IMR-90 (cell line): ENCODE measurements at regions of chr7 and their contacts with region 1.

Region 1: DNA sequence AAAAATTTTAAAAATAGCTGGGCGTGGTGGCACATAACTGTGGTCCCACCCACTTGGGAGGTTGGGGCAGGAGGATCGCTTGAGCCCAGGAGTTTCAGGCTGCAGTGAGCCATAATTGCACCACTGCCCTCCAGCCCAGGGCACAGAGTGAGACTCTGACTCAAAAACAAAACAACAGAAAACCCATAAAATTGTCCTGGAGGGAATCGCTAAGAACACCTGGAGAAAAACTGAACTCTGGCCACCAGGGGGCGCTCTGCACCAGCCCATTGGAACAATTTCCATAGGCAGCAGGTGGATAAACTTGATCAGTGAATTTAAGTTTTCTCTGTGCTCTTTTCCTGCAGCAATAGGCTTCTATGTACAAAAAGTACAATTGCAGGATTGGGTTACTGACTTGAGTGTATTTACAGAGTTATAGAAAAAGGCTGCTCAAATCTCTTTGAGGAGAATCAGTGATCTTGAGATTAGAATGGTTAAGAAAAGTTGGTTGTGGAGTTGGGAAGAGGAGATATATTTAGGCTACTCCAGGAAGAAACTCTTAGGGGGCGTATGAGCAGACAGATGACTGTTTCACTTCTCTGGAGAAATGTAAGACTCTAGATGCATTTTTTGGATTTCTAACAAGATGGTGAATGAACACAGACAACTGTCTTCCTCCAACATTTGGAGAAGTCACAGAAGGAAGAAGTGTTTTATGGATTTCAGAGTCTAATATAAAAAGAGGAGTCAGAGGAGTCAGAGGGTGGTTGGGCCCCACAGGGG is 274.9 kb upstream of the GALNT17 start:
- DNase-seq: peak; percentile 33
- ATAC-seq: no peak
- H3K4me3 ChIP-seq: no peak overlapping the region
- H3K27ac ChIP-seq: no peak overlapping the region
- H3K4me1 ChIP-seq: no peaks in the 10 kb centered on the region
- H3K27me3 ChIP-seq: no peaks in the 10 kb centered on the region
- CTCF ChIP-seq: peak; percentile 68
- POLR2A ChIP-seq: no peak
- RAD21 ChIP-seq: peak; percentile 67

Region 2: GRCh38 chr7:70693686-70694360 is 163.2 kb before region 1 on chr7:
- CTCF ChIA-PET with region 1: no interaction called
- POLR2A ChIA-PET with region 1: no interaction called
- dilution Hi-C with region 1: no loop called
- in situ Hi-C with region 1: no loop called
- intact Hi-C with region 1: no loop called
- DNase-seq: peak; percentile 44
- ATAC-seq: peak; percentile 76
- H3K4me3 ChIP-seq: peak overlapping the region; percentile 90
- H3K27ac ChIP-seq: no peak overlapping the region; the same call in 1 of the 2 replicates
- H3K4me1 ChIP-seq: peaks cover 4% of the 10 kb centered on the region
- H3K27me3 ChIP-seq: no peaks in the 10 kb centered on the region; the same call in 1 of the 2 replicates
- CTCF ChIP-seq: no peak
- POLR2A ChIP-seq: no peak
- RAD21 ChIP-seq: no peak

Region 3: DNA sequence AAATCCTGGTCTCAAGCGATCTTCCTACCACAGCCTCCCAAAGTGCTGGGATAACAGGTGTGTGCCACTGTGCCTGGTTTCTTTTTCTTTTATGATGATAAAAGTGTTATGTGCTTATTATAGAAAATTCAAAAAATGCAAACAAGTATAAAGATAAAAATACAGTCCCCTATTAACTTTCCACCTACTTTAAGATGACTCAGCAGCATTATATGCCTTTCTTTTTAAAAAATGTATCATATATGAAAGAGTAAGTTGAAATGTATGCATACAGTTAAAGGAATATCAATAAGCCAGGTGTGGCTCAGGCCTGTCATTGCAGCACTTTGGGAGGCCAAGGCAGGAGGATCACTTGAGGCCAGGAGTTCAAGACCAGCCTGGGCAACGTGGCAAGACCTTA is 58.0 kb after region 1 on chr7:
- CTCF ChIA-PET with region 1: no interaction called
- POLR2A ChIA-PET with region 1: no interaction called
- dilution Hi-C with region 1: no loop called
- in situ Hi-C with region 1: no loop called
- intact Hi-C with region 1: no loop called
- DNase-seq: no peak
- ATAC-seq: no peak
- H3K4me3 ChIP-seq: no peak overlapping the region
- H3K27ac ChIP-seq: no peak overlapping the region
- H3K4me1 ChIP-seq: no peaks in the 10 kb centered on the region
- H3K27me3 ChIP-seq: no peaks in the 10 kb centered on the region
- CTCF ChIP-seq: no peak
- POLR2A ChIP-seq: no peak
- RAD21 ChIP-seq: no peak

Region 4: DNA sequence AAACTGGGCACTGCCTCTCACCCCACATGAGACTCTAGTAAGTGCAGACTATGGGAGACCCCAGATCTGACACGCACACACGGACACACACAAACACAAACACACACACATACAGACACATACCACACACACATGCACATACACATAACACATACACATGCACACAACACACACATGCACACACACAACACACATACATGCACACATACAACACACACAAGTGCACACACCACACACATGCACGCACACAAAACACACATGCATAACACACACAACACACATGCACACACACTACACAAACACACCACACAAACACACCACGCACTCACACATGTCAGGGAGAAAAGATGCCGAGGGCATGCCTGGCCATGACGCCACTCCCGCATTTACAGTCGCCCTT is 1765.5 kb after region 1 on chr7:
- CTCF ChIA-PET with region 1: no interaction called
- POLR2A ChIA-PET with region 1: no interaction called
- dilution Hi-C with region 1: no loop called
- in situ Hi-C with region 1: loop called (anchors 25 kb)
- intact Hi-C with region 1: no loop called
- DNase-seq: no peak
- ATAC-seq: no peak
- H3K4me3 ChIP-seq: no peak overlapping the region
- H3K27ac ChIP-seq: no peak overlapping the region
- H3K4me1 ChIP-seq: peaks cover 1% of the 10 kb centered on the region; the same call in 1 of the 2 replicates
- H3K27me3 ChIP-seq: no peaks in the 10 kb centered on the region
- CTCF ChIP-seq: no peak
- POLR2A ChIP-seq: no peak
- RAD21 ChIP-seq: no peak

Region 5: GRCh38 chr7:72785166-72785955 is 1928.3 kb after region 1 on chr7:
- CTCF ChIA-PET with region 1: no interaction called
- POLR2A ChIA-PET with region 1: no interaction called
- dilution Hi-C with region 1: no loop called
- in situ Hi-C with region 1: loop called (anchors 25 kb)
- intact Hi-C with region 1: no loop called
- DNase-seq: peak; percentile 71
- ATAC-seq: peak; percentile 33
- H3K4me3 ChIP-seq: no peak overlapping the region
- H3K27ac ChIP-seq: no peak overlapping the region
- H3K4me1 ChIP-seq: peaks cover 5% of the 10 kb centered on the region
- H3K27me3 ChIP-seq: no peaks in the 10 kb centered on the region
- CTCF ChIP-seq: no peak
- POLR2A ChIP-seq: no peak
- RAD21 ChIP-seq: no peak